ENCODE measurements at regions of chr17 and their contacts with region 1.

Region 1: GRCh38 chr17:35088881-35089585 is 25.5 kb upstream of the RFFL start:
- DNase-seq: peak; percentile 81 to 96 (median 91)
- ATAC-seq: peak; percentile 78
- H3K4me3 ChIP-seq: peak overlapping the region; percentile 68
- H3K4me3 Mint-ChIP-seq: peak overlapping the region; percentile 97
- H3K27ac ChIP-seq: peak overlapping the region; percentile 65 to 89
- H3K27ac Mint-ChIP-seq: peak overlapping the region; percentile 98
- H3K4me1 ChIP-seq: peaks cover 27% of the 10 kb centered on the region
- H3K4me1 Mint-ChIP-seq: peaks cover 43% of the 10 kb centered on the region
- H3K27me3 ChIP-seq: no peaks in the 10 kb centered on the region
- H3K27me3 Mint-ChIP-seq: no peaks in the 10 kb centered on the region
- CTCF ChIP-seq: peak; percentile 69

Region 2: DNA sequence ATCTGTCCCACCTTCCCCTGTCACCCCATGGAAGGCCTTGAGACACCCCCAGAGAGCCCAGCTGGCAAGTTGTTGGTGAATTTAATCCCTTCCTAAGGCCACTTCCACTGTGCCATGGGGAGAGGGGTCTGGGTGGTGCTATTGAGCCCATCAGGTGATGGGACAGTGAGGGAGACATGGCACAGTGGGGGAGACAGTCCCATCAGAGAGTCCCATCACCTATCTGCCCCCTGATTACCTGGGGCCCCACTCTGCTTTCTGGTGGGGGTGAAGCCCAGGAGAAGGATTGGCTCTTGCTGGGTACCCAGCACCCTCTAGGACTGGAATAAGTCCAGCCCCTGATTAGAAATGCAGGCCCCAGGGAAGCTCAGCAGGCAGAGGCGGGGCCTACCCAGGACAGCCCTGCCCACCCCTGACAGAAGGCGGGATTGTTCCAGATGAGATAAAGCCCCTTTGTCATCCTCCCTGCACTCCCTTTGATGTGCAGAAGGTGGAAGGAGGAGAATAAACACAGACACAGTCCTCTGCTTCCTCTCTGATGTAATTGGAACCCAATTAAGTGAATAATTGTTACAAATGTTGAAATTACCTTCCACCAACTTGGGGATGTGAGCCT is 490.8 kb before region 1 on chr17:
- CTCF ChIA-PET with region 1: no interaction called
- POLR2A ChIA-PET with region 1: no interaction called
- intact Hi-C with region 1: no loop called
- DNase-seq: no peak
- ATAC-seq: no peak
- H3K4me3 ChIP-seq: no peak overlapping the region
- H3K4me3 Mint-ChIP-seq: no peak overlapping the region
- H3K27ac ChIP-seq: no peak overlapping the region
- H3K27ac Mint-ChIP-seq: no peak overlapping the region
- H3K4me1 ChIP-seq: no peaks in the 10 kb centered on the region
- H3K4me1 Mint-ChIP-seq: no peaks in the 10 kb centered on the region
- H3K27me3 ChIP-seq: peaks cover 0 to 3% of the 10 kb centered on the region in 2 experiments
- H3K27me3 Mint-ChIP-seq: peaks cover 22% of the 10 kb centered on the region
- CTCF ChIP-seq: no peak

Region 3: GRCh38 chr17:34980681-34981537 is 108.1 kb before region 1 on chr17:
- CTCF ChIA-PET with region 1: interaction called, 3 read pairs
- POLR2A ChIA-PET with region 1: interaction called, 7 read pairs
- intact Hi-C with region 1: loop called (anchors 1 kb)
- DNase-seq: peak in 8 of 9 experiments; percentile 13 to 90 (median 75)
- ATAC-seq: peak; percentile 84
- H3K4me3 ChIP-seq: peak overlapping the region; percentile 80 to 86
- H3K4me3 Mint-ChIP-seq: peak overlapping the region; percentile 92
- H3K27ac ChIP-seq: peak overlapping the region; percentile 93 to 98
- H3K27ac Mint-ChIP-seq: peak overlapping the region; percentile 98
- H3K4me1 ChIP-seq: peaks cover 26% of the 10 kb centered on the region
- H3K4me1 Mint-ChIP-seq: peaks cover 55% of the 10 kb centered on the region
- H3K27me3 ChIP-seq: no peaks in the 10 kb centered on the region
- H3K27me3 Mint-ChIP-seq: no peaks in the 10 kb centered on the region
- CTCF ChIP-seq: no peak

Region 4: GRCh38 chr17:34998205-34998604 is 90.8 kb before region 1 on chr17:
- CTCF ChIA-PET with region 1: interaction called, 20 read pairs
- POLR2A ChIA-PET with region 1: interaction called, 6 read pairs
- intact Hi-C with region 1: loop called (anchors 1 kb)
- DNase-seq: peak; percentile 57 to 87 (median 77)
- ATAC-seq: peak; percentile 97
- H3K4me3 ChIP-seq: no peak overlapping the region
- H3K4me3 Mint-ChIP-seq: no peak overlapping the region
- H3K27ac ChIP-seq: no peak overlapping the region
- H3K27ac Mint-ChIP-seq: peak overlapping the region; percentile 76
- H3K4me1 ChIP-seq: no peaks in the 10 kb centered on the region
- H3K4me1 Mint-ChIP-seq: peaks cover 5% of the 10 kb centered on the region
- H3K27me3 ChIP-seq: no peaks in the 10 kb centered on the region
- H3K27me3 Mint-ChIP-seq: no peaks in the 10 kb centered on the region
- CTCF ChIP-seq: peak; percentile 70

Region 5: GRCh38 chr17:35046740-35047283 is 42.2 kb before region 1 on chr17:
- CTCF ChIA-PET with region 1: interaction called, 5 read pairs
- POLR2A ChIA-PET with region 1: interaction called, 6 read pairs
- intact Hi-C with region 1: loop called (anchors 1 kb)
- DNase-seq: peak; percentile 21 to 89 (median 64)
- ATAC-seq: peak; percentile 74
- H3K4me3 ChIP-seq: peak overlapping the region; percentile 31 to 33
- H3K4me3 Mint-ChIP-seq: peak overlapping the region; percentile 75
- H3K27ac ChIP-seq: peak overlapping the region; percentile 39 to 71
- H3K27ac Mint-ChIP-seq: peak overlapping the region; percentile 97
- H3K4me1 ChIP-seq: peaks cover 79% of the 10 kb centered on the region
- H3K4me1 Mint-ChIP-seq: peaks cover 76% of the 10 kb centered on the region
- H3K27me3 ChIP-seq: no peaks in the 10 kb centered on the region
- H3K27me3 Mint-ChIP-seq: no peaks in the 10 kb centered on the region
- CTCF ChIP-seq: no peak

Region 6: DNA sequence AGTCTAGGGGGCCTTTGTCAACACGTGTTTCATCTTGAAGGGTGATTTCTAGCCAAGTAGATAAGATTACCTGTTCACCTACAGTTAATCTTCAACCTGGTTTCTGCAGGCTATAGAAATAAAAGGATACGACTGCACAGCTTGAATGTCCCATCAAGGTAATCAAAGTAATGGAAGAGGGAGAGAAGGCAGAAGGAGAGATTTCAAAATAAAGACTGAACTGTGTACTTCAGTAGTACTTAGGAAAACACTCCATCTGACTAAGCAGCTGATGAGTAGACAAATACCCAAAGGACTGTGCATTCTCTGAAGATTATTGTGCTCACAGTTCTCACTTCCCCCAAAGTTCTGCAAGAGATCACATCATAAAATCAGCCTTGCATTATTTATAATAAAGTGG is 19.7 kb before region 1 on chr17:
- CTCF ChIA-PET with region 1: interaction called, 17 read pairs
- POLR2A ChIA-PET with region 1: interaction called, 13 read pairs
- intact Hi-C with region 1: loop called in 1 of 2 experiments (anchors 2 kb)
- DNase-seq: no peak
- ATAC-seq: no peak
- H3K4me3 ChIP-seq: no peak overlapping the region
- H3K4me3 Mint-ChIP-seq: no peak overlapping the region
- H3K27ac ChIP-seq: no peak overlapping the region
- H3K27ac Mint-ChIP-seq: no peak overlapping the region
- H3K4me1 ChIP-seq: peaks cover 38% of the 10 kb centered on the region
- H3K4me1 Mint-ChIP-seq: peaks cover 61% of the 10 kb centered on the region
- H3K27me3 ChIP-seq: no peaks in the 10 kb centered on the region
- H3K27me3 Mint-ChIP-seq: no peaks in the 10 kb centered on the region
- CTCF ChIP-seq: no peak

Region 7: DNA sequence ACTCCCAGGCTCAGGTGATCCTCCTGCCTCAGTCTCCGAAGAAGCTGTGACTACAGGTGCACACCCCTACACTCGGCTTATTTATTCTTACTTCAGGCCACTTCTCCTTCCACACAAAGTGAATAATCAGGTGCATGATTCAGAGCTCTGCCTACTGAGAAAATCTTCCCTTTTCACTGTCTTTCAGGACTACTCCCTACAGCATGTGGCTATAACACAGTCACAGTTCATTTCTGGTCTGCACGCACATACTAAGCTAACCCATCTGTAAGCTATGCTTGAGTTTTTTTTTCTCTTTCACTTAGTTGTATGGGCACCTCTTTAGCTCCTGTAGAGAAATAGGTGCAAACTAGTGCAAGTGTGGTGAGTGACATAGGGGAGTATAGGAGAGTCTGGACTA is 146.3 kb after region 1 on chr17:
- CTCF ChIA-PET with region 1: no interaction called
- POLR2A ChIA-PET with region 1: no interaction called
- intact Hi-C with region 1: no loop called
- DNase-seq: no peak
- ATAC-seq: peak; percentile 25
- H3K4me3 ChIP-seq: no peak overlapping the region
- H3K4me3 Mint-ChIP-seq: peak overlapping the region; percentile 5
- H3K27ac ChIP-seq: no peak overlapping the region
- H3K27ac Mint-ChIP-seq: peak overlapping the region; percentile 100
- H3K4me1 ChIP-seq: peaks cover 75% of the 10 kb centered on the region
- H3K4me1 Mint-ChIP-seq: peaks cover 90% of the 10 kb centered on the region
- H3K27me3 ChIP-seq: no peaks in the 10 kb centered on the region
- H3K27me3 Mint-ChIP-seq: no peaks in the 10 kb centered on the region
- CTCF ChIP-seq: no peak

Region 8: DNA sequence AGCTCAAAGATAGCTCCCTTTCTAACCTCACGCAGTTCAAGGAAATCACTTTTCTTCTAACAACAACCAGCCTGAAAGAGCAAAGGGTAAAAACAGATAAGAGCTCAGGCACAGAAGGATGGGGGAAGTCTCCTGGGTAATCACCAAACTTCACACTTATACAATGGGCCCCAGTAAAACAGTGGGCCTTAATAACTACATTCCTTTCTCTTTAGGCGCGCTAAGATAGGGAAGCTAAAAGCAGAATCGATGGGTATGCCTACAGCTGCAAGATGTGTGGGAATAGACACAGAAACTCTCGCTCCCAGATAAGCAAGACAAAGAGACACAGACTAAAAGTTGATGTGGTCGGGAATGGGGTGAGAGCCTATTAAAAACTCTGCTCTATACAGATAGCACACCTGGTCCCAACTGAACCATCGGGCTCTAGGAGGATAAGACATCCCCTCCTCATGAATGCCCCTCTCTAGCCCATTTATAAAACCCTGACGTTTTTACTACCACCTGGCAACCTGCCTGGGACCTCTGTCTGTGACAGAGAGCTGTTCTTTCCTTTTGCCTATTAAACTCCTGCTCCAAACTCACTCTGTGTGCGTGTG is 853.7 kb after region 1 on chr17:
- CTCF ChIA-PET with region 1: no interaction called
- POLR2A ChIA-PET with region 1: no interaction called
- intact Hi-C with region 1: no loop called
- DNase-seq: no peak
- ATAC-seq: no peak
- H3K4me3 ChIP-seq: no peak overlapping the region
- H3K4me3 Mint-ChIP-seq: no peak overlapping the region
- H3K27ac ChIP-seq: no peak overlapping the region
- H3K27ac Mint-ChIP-seq: peak overlapping the region; percentile 1
- H3K4me1 ChIP-seq: peaks cover 3% of the 10 kb centered on the region
- H3K4me1 Mint-ChIP-seq: peaks cover 12% of the 10 kb centered on the region
- H3K27me3 ChIP-seq: no peaks in the 10 kb centered on the region
- H3K27me3 Mint-ChIP-seq: no peaks in the 10 kb centered on the region
- CTCF ChIP-seq: no peak

Measured in CD8-positive, alpha-beta T cell (primary cell).